ENCODE measurements at regions of chr6 and their contacts with region 1.

Region 1: DNA sequence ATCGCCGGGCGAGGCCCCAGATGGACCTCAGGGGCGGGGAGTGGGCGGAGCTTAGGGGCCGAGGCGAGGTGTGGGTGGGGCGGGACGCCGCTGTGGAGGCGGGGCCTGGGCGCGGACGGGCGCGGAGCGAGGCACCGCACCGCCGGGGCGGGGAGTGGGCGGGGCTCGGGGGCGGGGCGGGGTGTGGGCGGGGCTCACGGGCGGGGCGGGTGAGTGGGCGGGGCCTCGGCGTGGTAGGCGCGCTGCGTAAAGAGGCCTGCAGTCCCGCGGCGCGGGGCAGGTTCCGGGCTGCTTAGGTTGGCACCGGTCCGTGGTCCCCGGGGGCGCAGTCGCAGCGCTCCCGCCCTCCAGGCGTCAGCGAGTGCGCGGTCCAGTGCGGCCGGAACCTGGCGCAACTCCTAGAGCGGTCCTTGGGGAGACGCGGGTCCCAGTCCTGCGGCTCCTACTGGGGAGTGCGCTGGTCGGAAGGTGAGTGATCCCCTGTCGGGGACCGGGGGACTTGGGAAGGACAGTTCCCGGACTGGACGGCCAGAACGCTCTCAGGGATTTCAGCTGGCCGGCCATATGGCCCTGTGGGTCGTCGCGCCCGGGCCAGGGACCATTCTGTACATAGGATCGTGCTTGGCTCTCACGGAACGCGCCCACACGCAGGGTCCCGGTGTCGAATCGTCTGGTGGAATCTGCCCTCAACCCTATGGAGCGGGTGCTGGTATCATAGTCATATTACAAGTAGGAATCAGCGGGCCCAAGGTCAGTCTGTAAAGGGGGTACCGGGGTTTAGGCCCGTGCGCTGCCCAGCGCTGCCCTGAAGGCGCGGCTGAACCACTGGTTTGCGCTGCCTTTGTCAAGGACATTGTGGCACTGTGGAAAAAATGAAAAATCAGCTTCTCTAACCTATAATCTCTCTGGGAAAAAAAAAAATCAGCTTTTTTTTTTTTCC is at the start of gene NQO2:
- DNase-seq: peak; percentile 88
- H3K4me3 ChIP-seq: peak within 1 kb of the TSS; percentile 99
- H3K27ac ChIP-seq: peak within 1 kb of the TSS; percentile 87
- H3K4me1 ChIP-seq: peaks cover 6% of the 10 kb centered on the region
- H3K27me3 ChIP-seq: no peaks in the 10 kb centered on the region
- CTCF ChIP-seq: no peak
- total RNA-seq, gene NQO2: 92.7 and 97.3 TPM in 2 replicates

Region 2: GRCh38 chr6:3052481-3053230 is 52.8 kb after region 1 on chr6:
- CTCF ChIA-PET with region 1: interaction called, 7 read pairs
- POLR2A ChIA-PET with region 1: no interaction called
- intact Hi-C with region 1: loop called (anchors 1 kb)
- DNase-seq: no peak
- H3K4me3 ChIP-seq: no peak overlapping the region
- H3K27ac ChIP-seq: no peak overlapping the region
- H3K4me1 ChIP-seq: peaks cover 16% of the 10 kb centered on the region
- H3K27me3 ChIP-seq: no peaks in the 10 kb centered on the region
- CTCF ChIP-seq: no peak

Region 3: GRCh38 chr6:3251462-3252314 is 251.8 kb after region 1 on chr6:
- CTCF ChIA-PET with region 1: interaction called, 4 read pairs
- POLR2A ChIA-PET with region 1: no interaction called
- intact Hi-C with region 1: loop called (anchors 5 kb)
- DNase-seq: peak; percentile 90
- H3K4me3 ChIP-seq: no peak overlapping the region
- H3K27ac ChIP-seq: no peak overlapping the region
- H3K4me1 ChIP-seq: no peaks in the 10 kb centered on the region
- H3K27me3 ChIP-seq: no peaks in the 10 kb centered on the region
- CTCF ChIP-seq: peak; percentile 97

Region 4: GRCh38 chr6:3732345-3733141 is 732.7 kb after region 1 on chr6:
- CTCF ChIA-PET with region 1: no interaction called
- POLR2A ChIA-PET with region 1: no interaction called
- intact Hi-C with region 1: loop called (anchors 5 kb)
- DNase-seq: peak; percentile 76
- H3K4me3 ChIP-seq: no peak overlapping the region
- H3K27ac ChIP-seq: no peak overlapping the region
- H3K4me1 ChIP-seq: no peaks in the 10 kb centered on the region
- H3K27me3 ChIP-seq: no peaks in the 10 kb centered on the region
- CTCF ChIP-seq: peak; percentile 91

Region 5: GRCh38 chr6:4164117-4164442 is 1164.2 kb after region 1 on chr6:
- CTCF ChIA-PET with region 1: interaction called, 10 read pairs
- POLR2A ChIA-PET with region 1: no interaction called
- intact Hi-C with region 1: no loop called
- DNase-seq: no peak
- H3K4me3 ChIP-seq: no peak overlapping the region
- H3K27ac ChIP-seq: no peak overlapping the region
- H3K4me1 ChIP-seq: peaks cover under 1% of the 10 kb centered on the region
- H3K27me3 ChIP-seq: no peaks in the 10 kb centered on the region
- CTCF ChIP-seq: no peak